Transverse colon (tissue), 4 donors: ENCODE measurements at regions of chr2 and their contacts with region 1.

Region 1: GRCh38 chr2:239326831-239327535 is 73.8 kb downstream of the HDAC4 start:
- DNase-seq: no peak
- H3K4me3 ChIP-seq: peak overlapping the region in 1 of 4 donors; percentile 5
- H3K27ac ChIP-seq: peak overlapping the region; percentile 74 to 90 (median 82)
- H3K4me1 ChIP-seq: peaks cover 44 to 61% (median 53%) of the 10 kb centered on the region in 4 donors
- H3K27me3 ChIP-seq: no peaks in the 10 kb centered on the region
- CTCF ChIP-seq: no peak
- EP300 ChIP-seq: no peak
- POLR2A ChIP-seq: no peak

Region 2: DNA sequence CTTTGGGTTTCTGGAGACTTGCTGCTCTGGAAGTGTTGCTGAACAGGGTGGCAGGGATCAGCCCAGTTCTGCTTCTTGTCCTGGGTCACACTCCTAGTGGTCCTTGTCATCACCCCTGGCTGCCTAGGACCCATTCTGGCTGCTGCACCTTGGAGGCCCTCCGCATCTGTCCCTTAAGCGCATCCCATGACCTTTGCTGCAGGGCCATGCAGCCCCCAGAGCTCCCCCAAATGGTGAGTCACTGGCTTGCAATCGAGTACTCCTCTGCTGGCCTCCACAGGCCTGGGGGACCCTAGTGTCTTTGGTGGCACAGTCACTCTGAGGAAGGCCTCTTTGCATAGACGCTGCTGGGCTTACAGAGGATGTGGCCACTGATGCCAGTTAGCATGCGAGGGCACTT is 711.8 kb before region 1 on chr2:
- in situ Hi-C with region 1: no loop called
- intact Hi-C with region 1: no loop called
- DNase-seq: no peak
- H3K4me3 ChIP-seq: no peak overlapping the region
- H3K27ac ChIP-seq: no peak overlapping the region
- H3K4me1 ChIP-seq: no peaks in the 10 kb centered on the region
- H3K27me3 ChIP-seq: no peaks in the 10 kb centered on the region
- CTCF ChIP-seq: no peak
- EP300 ChIP-seq: no peak
- POLR2A ChIP-seq: no peak

Region 3: GRCh38 chr2:239361311-239361642 is 34.3 kb after region 1 on chr2:
- in situ Hi-C with region 1: no loop called
- intact Hi-C with region 1: loop called (anchors 5 kb)
- DNase-seq: no peak
- H3K4me3 ChIP-seq: no peak overlapping the region
- H3K27ac ChIP-seq: peak overlapping the region in 3 of 4 donors; percentile 2 to 66 (median 52)
- H3K4me1 ChIP-seq: peaks cover 0 to 16% (median 6%) of the 10 kb centered on the region in 4 donors
- H3K27me3 ChIP-seq: no peaks in the 10 kb centered on the region
- CTCF ChIP-seq: peak in 1 of 5 experiments; percentile 15
- EP300 ChIP-seq: no peak
- POLR2A ChIP-seq: no peak